ENCODE measurements at regions of chr1 and their contacts with region 1.

Region 1: DNA sequence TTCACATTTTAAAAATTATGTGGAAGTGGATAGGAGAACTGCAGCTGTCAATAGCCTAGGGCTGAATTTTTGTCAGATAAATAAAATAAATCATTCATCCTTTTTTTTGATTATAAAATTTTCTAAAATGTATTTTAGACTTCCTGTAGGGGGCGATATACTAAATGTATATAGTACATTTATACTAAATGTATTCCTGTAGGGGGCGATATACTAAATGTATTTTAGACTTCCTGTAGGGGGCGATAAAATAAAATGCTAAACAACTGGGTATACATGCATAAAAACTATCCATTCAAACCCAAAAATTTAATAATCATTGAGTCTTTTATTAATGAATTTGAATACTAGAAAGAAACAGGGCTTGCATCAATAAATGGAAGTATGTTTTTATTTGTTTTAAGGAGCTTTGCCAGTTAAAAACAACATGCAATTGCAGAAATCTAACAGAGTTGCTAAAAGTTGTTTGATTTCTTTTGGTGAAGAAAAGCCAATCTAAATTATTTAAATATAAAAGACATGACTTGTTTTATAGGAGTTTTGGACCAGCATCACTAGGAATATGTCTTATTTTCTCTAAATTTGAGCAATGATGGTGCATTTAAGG is 31.4 kb downstream of the CLCA1 start:
- DNase-seq: no peak
- H3K4me3 ChIP-seq: no peak overlapping the region
- CTCF ChIP-seq: peak in 1 of 3 donors; percentile 74
- POLR2A ChIP-seq: no peak

Region 2: DNA sequence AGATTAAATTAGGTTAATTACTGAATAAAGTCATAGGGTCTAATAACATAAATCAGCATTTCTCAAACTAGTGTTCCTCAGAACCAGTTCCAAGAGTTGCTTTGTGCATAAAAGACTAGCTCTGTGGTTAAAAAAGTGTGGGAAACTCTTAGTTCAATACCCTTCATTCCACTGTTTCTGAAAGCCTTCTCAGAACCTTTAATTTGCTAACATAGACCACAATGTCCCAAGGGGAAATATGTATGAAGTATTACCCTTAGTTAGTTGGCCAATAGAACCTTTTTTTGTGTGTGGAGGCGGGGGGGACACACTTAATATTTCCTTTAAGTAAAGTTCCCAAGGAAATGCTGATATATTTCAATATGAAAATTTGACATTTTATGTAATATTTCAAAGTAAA is 124.4 kb before region 1 on chr1:
- intact Hi-C with region 1: loop called (anchors 5 kb)
- DNase-seq: no peak
- H3K4me3 ChIP-seq: no peak overlapping the region
- CTCF ChIP-seq: no peak
- POLR2A ChIP-seq: no peak

Region 3: DNA sequence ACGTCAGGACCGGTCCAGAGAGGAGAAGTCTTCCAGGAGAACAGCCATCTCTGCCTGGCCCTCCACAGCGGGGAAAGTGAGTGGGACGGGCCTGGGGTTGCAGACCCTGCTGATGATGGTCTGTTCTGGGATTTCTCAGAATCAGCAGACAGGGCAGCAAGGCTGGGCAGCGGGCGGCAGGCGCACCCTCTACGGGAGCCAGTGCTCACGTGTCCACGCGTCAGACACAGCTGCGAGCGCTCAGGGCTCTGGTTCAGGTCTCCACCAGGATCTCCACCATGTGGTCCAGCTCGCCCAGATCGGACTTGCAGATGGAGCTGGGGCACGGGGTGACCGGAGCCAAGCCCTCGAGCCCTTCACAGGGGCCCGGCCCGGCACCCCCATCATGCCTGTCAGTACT is 52.3 kb after region 1 on chr1:
- intact Hi-C with region 1: no loop called
- DNase-seq: no peak
- H3K4me3 ChIP-seq: no peak overlapping the region
- CTCF ChIP-seq: no peak
- POLR2A ChIP-seq: no peak

Region 4: DNA sequence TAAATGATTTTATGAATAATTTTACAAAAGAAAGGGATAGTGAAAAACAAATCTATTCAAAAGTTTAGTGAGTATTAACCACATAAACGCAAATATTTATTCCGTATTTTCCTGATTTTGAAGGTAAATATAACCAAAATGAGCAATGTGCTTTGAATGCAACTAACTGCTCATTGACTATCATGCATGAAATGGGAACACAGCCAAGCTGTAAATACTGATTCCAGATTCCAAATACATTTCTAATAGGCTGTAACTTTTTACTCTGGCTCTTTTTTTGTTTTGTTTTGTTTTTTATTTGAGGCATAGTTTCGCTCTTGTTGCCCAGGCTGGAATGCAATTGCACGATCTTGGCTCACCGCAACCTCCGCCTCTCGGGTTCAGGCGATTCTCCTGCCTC is 372.0 kb after region 1 on chr1:
- intact Hi-C with region 1: no loop called
- DNase-seq: no peak
- H3K4me3 ChIP-seq: no peak overlapping the region
- CTCF ChIP-seq: no peak
- POLR2A ChIP-seq: no peak

Region 5: DNA sequence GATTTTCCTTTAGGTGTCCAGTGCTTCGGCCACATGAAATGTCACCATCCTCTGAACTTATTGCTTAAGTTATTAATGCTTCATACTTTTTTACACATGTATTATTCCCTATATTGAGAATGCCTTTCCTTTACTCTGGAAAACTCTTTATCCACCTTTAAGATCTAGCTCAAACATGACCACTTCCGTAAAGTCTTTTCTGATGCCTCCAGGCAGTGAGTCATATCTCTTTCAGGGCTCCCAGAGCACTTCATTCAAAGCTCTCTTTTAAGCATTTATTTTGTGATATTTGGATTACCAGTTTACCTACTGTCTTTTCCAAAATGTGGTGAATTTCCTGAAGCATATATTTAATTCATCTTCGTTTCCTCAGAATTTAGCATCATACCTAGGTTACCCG is 593.2 kb after region 1 on chr1:
- intact Hi-C with region 1: no loop called
- DNase-seq: no peak
- H3K4me3 ChIP-seq: no peak overlapping the region
- CTCF ChIP-seq: no peak
- POLR2A ChIP-seq: no peak